ENCODE measurements at regions of chr22 and their contacts with region 1.

Region 1: GRCh38 chr22:49838771-49839717 is 11.4 kb upstream of the BRD1 start:
- DNase-seq: peak; percentile 63 to 96 (median 93)
- ATAC-seq: peak; percentile 99
- H3K4me3 ChIP-seq: peak overlapping the region; percentile 66
- H3K4me3 Mint-ChIP-seq: peak overlapping the region; percentile 61 to 86 (median 82)
- H3K27ac ChIP-seq: peak overlapping the region; percentile 100
- H3K27ac Mint-ChIP-seq: peak overlapping the region; percentile 88 to 98 (median 95)
- H3K4me1 ChIP-seq: peaks cover 14 to 18% of the 10 kb centered on the region in 2 donors
- H3K4me1 Mint-ChIP-seq: peaks cover 21 to 32% (median 28%) of the 10 kb centered on the region in 7 donors
- H3K27me3 ChIP-seq: no peaks in the 10 kb centered on the region
- H3K27me3 Mint-ChIP-seq: peaks cover 0 to 12% (median 0%) of the 10 kb centered on the region in 5 donors

Region 2: DNA sequence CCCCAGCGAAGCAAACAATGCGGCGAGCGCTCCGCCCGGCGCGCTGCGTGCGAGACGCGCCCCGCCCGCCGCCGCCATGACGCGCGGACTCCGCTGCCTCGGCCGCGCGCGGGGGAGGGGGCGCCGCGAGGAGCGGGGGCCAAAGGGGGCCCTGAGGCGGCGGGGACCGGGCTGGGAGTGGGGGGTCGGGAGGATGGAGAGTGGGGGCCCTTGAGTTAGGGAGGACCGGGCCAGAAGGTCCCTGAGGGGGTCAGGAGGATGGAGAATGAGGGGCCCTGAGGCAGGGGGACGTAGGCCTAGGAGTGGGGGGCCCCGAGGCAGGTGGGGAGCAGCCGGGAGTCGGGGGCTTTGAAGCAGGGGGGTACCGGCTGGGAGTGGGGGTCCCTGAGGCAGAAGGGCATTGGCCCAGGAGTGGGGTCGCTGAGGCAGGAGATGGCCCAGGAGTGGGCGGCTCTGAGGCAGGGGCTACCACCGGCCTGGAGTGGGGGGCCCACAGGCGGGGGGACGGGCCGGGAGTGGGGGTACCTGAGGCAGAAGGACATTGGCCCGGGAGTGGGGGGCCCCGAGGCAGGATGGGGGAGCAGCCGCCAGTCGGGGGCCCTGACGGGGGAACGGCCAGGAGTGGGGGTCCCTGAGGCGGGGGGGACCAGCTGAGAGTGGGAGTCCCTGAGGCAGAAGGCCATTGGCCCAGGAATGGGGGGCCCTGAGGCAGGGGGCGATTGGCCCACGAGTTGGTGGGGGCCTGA is 11.0 kb before region 1 on chr22 and contains the start of gene BRD1:
- CTCF ChIA-PET with region 1: no interaction called
- POLR2A ChIA-PET with region 1: interaction called, 27 read pairs
- intact Hi-C with region 1: loop called (anchors 1 kb)
- DNase-seq: peak in 8 of 9 donors; percentile 35 to 71 (median 52)
- ATAC-seq: peak; percentile 76
- H3K4me3 ChIP-seq: peak within 1 kb of the TSS; percentile 75
- H3K4me3 Mint-ChIP-seq: peak within 1 kb of the TSS; percentile 90 to 93 (median 92)
- H3K27ac ChIP-seq: peak within 1 kb of the TSS; percentile 95
- H3K27ac Mint-ChIP-seq: peak within 1 kb of the TSS; percentile 87 to 96 (median 94)
- H3K4me1 ChIP-seq: peaks cover 28 to 36% of the 10 kb centered on the region in 2 donors
- H3K4me1 Mint-ChIP-seq: peaks cover 33 to 63% (median 50%) of the 10 kb centered on the region in 7 donors
- H3K27me3 ChIP-seq: no peaks in the 10 kb centered on the region
- H3K27me3 Mint-ChIP-seq: peaks cover 0 to 12% (median 0%) of the 10 kb centered on the region in 5 donors
- total RNA-seq, gene BRD1: 50.0 to 130 (median 87.7) TPM